ENCODE measurements at regions of chr1 and their contacts with region 1.

Region 1: DNA sequence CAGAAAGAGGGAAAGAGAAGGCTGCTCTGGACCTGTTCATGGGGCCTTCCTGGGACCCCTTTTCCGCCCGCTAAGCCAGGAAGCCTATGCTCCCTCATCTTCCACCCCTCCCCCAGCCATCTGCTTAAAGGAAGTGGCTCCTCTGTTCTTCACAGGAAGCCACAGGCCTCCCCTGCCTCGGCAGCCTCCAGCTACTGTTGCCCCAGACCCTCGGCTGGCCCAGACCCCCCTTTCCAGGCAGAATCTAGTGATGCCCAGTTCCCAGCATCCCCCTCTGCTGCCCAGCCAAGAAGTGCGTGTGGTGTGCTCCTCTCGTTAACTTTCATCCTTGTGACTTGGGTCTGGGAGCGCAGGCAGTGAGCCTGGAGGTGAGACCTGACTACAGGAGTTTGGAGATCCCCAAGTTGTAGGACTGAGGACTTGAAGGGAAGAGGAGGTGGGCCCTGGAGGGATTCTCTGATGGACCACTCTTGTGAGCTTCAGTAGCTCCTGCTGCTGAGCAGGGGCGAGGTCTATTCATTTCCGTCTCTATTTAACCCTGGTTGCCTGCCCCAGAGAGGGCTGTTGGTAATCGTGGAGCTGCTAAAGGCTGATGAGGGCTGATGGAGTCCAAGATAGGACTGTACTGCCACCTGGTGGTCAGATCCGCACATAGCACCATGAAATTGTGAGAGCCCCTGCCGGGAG is 9.1 kb downstream of the IFI6 start:
- DNase-seq: peak; percentile 88
- ATAC-seq: peak; percentile 73

Region 2: GRCh38 chr1:27136998-27137542 is 525.8 kb before region 1 on chr1:
- intact Hi-C with region 1: no loop called
- DNase-seq: peak; percentile 88
- ATAC-seq: peak; percentile 27

Region 3: GRCh38 chr1:27402349-27402754 is 260.5 kb before region 1 on chr1:
- intact Hi-C with region 1: loop called (anchors 10 kb)
- DNase-seq: peak; percentile 84
- ATAC-seq: peak; percentile 59

Region 4: DNA sequence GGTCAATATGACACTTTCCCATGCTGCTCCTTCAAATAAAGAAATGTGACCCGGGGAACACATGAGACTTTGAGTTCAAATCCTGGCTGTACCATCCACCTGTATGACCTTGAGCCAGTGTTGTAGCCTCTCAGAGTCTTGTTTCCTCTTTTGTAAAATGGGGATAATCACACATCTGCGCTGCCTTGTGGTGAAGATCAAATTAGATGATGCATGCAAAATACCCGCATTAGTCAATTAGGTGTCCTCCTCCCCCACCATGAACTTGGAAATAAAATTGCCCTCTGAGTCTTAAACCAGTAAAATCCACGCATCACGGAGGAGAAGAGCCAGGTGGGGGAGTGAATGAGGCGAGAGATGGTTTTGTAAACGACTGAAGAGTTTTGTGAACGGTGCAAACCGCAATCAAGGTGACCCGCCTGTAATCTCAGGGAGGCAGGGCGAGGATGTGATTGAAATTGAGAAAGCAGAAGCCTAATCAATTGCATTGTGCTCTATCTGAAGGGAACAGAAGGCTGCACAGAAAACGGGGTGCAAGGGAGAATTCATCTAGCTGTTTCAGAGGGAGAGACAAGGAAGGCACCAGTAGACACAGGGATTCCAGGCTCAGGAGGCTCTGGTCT is 53.1 kb before region 1 on chr1:
- intact Hi-C with region 1: loop called (anchors 2 kb)
- DNase-seq: no peak
- ATAC-seq: no peak

Region 5: GRCh38 chr1:27785781-27786455 is 123.1 kb after region 1 on chr1:
- intact Hi-C with region 1: no loop called
- DNase-seq: no peak
- ATAC-seq: peak; percentile 20